Mammary epithelial cell (primary cell): ENCODE measurements at regions of chr12 and their contacts with region 1.

Region 1: DNA sequence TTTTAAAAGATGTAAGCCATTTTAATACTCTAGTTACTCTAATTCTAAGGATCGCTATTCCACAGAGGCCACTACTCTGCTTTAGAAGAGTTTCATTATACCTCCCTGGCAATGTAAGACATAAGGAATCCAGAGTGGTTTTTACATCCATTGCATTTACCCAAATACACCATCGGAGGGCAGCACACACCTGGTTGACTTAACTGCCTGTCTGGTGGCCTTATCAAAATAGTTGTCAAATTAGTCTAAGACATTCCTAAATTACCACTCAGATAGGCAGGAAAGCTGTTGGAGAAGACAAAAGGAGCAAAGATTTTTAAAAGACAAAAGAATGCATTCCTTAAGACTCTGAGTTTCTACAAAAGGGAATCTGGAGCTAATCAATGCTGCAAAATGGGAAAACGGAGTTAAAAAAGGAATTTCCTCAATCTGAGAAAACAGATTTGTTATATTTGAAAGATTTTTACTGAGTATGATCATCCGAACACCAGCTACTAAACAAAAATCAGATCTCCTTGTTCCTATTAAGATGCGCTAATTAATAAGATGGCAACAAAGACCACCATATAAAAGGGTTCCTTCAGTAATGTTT is 33.8 kb upstream of the FGD4 start:
- DNase-seq: peak; percentile 62
- H3K4me3 ChIP-seq: no peak overlapping the region
- H3K27ac ChIP-seq: no peak overlapping the region
- H3K4me1 ChIP-seq: peaks cover 4% of the 10 kb centered on the region
- H3K27me3 ChIP-seq: no peaks in the 10 kb centered on the region
- CTCF ChIP-seq: peak; percentile 82 to 91

Region 2: DNA sequence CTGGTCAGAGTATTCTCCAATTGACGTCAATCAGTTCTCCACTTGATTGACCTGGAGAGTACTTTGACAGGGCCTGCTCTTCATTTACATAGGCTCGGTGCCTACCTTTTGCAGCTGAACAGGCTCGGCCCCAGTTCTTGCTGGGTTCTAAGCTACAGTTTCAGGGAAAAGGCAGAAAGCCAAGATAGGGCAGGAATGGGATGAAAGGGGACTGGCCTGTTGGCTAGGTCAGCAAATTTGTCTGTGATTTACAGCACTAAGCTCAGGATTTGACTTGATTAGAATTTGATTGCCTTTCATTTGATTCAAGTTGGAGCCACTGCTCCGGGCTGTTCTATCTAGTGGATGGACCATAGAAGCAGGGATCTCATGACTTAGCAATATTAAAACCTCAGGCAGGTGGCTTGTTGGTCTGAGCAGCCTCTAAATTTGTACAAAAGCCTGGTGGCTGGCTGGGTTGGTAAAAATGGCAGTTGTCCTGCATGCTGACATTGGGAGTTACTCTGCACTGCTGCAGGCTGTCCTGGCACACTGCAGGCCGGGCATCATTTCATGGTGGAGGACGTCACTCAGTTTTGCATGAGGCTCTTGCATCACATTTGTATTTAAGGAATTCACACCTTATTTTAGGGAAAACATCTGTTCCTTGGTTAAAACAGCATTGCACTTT is 187.1 kb before region 1 on chr12:
- CTCF ChIA-PET with region 1: no interaction called
- dilution Hi-C with region 1: no loop called
- in situ Hi-C with region 1: no loop called
- intact Hi-C with region 1: no loop called
- DNase-seq: no peak
- H3K4me3 ChIP-seq: no peak overlapping the region
- H3K27ac ChIP-seq: no peak overlapping the region
- H3K4me1 ChIP-seq: no peaks in the 10 kb centered on the region
- H3K27me3 ChIP-seq: no peaks in the 10 kb centered on the region
- CTCF ChIP-seq: no peak

Region 3: GRCh38 chr12:32399337-32400113 is 34.0 kb after region 1 on chr12 and contains the start of gene FGD4:
- CTCF ChIA-PET with region 1: no interaction called
- dilution Hi-C with region 1: no loop called
- in situ Hi-C with region 1: no loop called
- intact Hi-C with region 1: loop called (anchors 2 kb)
- DNase-seq: peak; percentile 95
- H3K4me3 ChIP-seq: peak within 1 kb of the TSS; percentile 72 to 99 (median 93)
- H3K27ac ChIP-seq: peak within 1 kb of the TSS; percentile 90
- H3K4me1 ChIP-seq: peaks cover 21% of the 10 kb centered on the region
- H3K27me3 ChIP-seq: no peaks in the 10 kb centered on the region
- CTCF ChIP-seq: peak; percentile 15 to 58
- total RNA-seq, gene FGD4: 20.8 to 35.3 TPM

Region 4: GRCh38 chr12:32437095-32437515 is 71.5 kb after region 1 on chr12:
- CTCF ChIA-PET with region 1: interaction called, 5 read pairs
- dilution Hi-C with region 1: no loop called
- in situ Hi-C with region 1: no loop called
- intact Hi-C with region 1: loop called (anchors 1 kb)
- DNase-seq: peak; percentile 90
- H3K4me3 ChIP-seq: no peak overlapping the region
- H3K27ac ChIP-seq: peak overlapping the region; percentile 87
- H3K4me1 ChIP-seq: peaks cover 54% of the 10 kb centered on the region
- H3K27me3 ChIP-seq: no peaks in the 10 kb centered on the region
- CTCF ChIP-seq: no peak

Region 5: DNA sequence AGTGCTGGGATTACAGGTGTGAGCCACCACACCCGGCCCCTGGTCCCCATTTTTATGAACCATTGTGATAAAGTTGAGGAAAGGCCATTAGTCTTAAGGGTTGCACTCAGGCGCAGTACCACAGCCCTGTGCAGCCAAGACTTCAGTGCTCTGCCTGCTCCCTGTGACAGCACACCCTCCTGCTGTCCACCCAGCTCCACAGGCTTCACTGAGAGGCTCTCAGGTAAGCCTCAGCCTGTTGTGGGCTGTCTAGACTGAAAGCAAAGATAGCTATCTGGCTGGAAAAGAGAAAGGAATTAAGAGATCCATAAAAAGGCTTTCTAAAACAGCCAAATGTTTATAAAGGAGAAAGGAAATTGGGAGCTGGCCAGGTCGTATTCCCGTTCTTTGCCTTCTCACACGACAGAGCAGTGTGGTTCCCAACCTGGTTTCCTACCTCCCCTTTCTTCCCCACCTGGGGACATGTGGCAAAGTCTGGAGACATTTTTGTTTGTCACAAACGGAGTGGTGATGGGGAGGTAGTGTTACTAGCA is 294.4 kb after region 1 on chr12:
- CTCF ChIA-PET with region 1: no interaction called
- dilution Hi-C with region 1: no loop called
- in situ Hi-C with region 1: loop called (anchors 10 to 25 kb)
- intact Hi-C with region 1: loop called (anchors 1 kb)
- DNase-seq: no peak
- H3K4me3 ChIP-seq: no peak overlapping the region
- H3K27ac ChIP-seq: no peak overlapping the region
- H3K4me1 ChIP-seq: no peaks in the 10 kb centered on the region
- H3K27me3 ChIP-seq: no peaks in the 10 kb centered on the region
- CTCF ChIP-seq: no peak

Region 6: DNA sequence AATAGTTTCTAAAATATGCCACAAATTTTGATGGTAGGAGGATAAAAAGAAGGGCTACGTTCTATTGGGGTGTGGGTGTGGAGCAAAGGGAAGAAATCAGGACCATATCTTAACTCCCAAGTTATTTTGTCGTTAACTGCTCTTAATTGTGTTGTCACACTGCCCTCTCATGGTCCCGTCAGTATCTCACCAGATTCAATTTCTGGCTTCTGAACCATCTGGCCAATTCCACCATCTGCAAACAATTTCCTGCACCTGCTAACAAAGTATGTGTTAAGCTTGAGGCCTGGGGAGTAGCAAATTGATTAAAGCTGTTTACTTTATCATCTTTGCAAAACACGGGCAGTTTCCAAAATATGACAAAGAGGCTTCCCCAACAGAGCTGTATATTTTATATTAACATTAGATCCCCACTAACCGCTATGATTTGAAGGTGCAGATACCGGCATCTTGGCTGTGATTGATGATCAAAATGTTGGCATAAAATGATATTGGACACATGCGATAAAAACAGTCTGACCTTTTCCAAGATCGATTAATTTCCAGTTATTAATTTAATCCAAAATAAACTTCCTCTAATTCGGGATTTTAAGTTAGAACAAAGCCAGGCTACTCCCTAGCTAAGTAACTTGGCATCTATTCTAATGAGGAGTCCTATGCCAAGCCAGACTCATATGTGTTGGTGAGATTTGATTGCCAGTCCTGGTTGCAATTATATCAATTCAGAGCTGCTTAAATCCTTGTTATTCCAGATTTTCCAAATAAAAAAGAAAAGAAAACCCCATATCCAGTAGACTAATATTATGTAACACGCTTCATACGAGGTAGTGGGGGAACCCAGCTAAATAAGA is 306.6 kb after region 1 on chr12:
- CTCF ChIA-PET with region 1: no interaction called
- dilution Hi-C with region 1: no loop called
- in situ Hi-C with region 1: loop called in 1 of 2 experiments (anchors 25 kb)
- intact Hi-C with region 1: loop called (anchors 1 kb)
- DNase-seq: peak; percentile 37
- H3K4me3 ChIP-seq: no peak overlapping the region
- H3K27ac ChIP-seq: no peak overlapping the region
- H3K4me1 ChIP-seq: no peaks in the 10 kb centered on the region
- H3K27me3 ChIP-seq: no peaks in the 10 kb centered on the region
- CTCF ChIP-seq: peak; percentile 53 to 63

Region 7: GRCh38 chr12:32718926-32719325 is 353.4 kb after region 1 on chr12:
- CTCF ChIA-PET with region 1: no interaction called
- dilution Hi-C with region 1: no loop called
- in situ Hi-C with region 1: no loop called
- intact Hi-C with region 1: loop called (anchors 5 kb)
- DNase-seq: peak; percentile 98
- H3K4me3 ChIP-seq: no peak overlapping the region
- H3K27ac ChIP-seq: peak overlapping the region; percentile 100
- H3K4me1 ChIP-seq: peaks cover 24% of the 10 kb centered on the region
- H3K27me3 ChIP-seq: no peaks in the 10 kb centered on the region
- CTCF ChIP-seq: no peak